IMR-90 (cell line): ENCODE measurements at regions of chr20 and their contacts with region 1.

Region 1: DNA sequence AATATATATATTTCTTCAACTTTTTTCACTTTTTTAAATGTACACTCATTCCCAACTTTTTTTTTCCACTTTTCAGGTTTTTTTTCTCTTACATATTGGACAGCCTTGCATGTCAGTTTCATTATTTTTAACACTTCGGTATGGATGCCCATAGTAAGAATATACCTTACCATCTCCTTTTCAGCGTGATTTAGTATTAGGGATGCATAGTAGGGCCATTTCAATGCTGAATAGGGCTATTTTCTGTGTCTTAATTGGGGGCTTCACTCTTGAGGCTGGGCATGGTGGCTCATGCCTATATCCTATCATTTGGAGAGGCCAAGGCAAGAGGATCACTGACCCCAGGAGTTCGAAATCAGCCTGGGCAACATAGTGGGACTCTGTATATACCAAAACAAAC is 6.7 kb downstream of the RNF114 start:
- DNase-seq: no peak
- ATAC-seq: no peak
- H3K4me3 ChIP-seq: no peak overlapping the region
- H3K27ac ChIP-seq: no peak overlapping the region
- H3K4me1 ChIP-seq: peaks cover 9% of the 10 kb centered on the region
- H3K27me3 ChIP-seq: no peaks in the 10 kb centered on the region
- CTCF ChIP-seq: no peak
- POLR2A ChIP-seq: no peak
- RAD21 ChIP-seq: no peak

Region 2: DNA sequence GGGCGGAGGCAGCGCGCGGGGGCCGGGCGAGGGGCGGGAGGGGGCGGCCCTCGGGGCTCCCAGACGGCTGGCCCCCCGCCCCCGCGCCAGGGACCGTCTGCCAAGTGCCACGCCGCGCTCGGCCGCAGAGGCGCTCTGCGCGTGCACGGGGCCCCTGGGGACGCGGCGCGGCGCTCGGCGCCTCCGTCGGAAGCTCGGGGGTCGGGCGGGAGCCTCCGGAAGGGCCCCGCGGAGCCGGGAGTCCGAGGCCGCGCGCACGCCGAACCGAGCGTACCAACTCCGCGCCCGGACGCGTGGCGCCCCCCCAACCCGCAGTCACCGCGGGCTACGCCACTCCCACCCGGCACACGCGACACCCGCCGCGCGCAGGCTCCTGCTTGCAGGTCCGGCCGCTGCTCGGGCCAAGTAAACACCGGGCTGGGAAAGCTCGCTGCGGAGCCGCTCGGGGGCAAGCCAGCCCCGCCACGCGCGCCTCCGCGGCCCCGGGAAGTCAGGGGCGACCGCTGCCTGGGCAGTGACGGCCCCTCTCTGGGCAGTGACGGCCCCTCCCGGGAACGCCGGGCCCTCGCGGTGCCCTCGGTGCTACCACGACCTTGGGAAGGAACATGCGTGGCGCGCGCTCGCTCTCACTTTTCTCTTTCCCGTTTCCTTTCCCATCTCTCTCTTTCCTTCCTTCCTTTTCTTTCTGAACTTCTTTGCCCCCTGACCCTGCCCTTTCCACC is 1114.8 kb before region 1 on chr20:
- CTCF ChIA-PET with region 1: no interaction called
- POLR2A ChIA-PET with region 1: no interaction called
- dilution Hi-C with region 1: no loop called
- in situ Hi-C with region 1: no loop called
- intact Hi-C with region 1: no loop called
- DNase-seq: peak; percentile 61
- ATAC-seq: peak; percentile 84
- H3K4me3 ChIP-seq: peak overlapping the region; percentile 58
- H3K27ac ChIP-seq: no peak overlapping the region
- H3K4me1 ChIP-seq: peaks cover 13% of the 10 kb centered on the region; the same call in 1 of the 2 replicates
- H3K27me3 ChIP-seq: peaks cover 18% of the 10 kb centered on the region
- CTCF ChIP-seq: no peak
- POLR2A ChIP-seq: no peak
- RAD21 ChIP-seq: no peak

Region 3: GRCh38 chr20:49608743-49609670 is 333.9 kb before region 1 on chr20:
- CTCF ChIA-PET with region 1: no interaction called
- POLR2A ChIA-PET with region 1: no interaction called
- dilution Hi-C with region 1: no loop called
- in situ Hi-C with region 1: no loop called
- intact Hi-C with region 1: no loop called
- DNase-seq: no peak
- ATAC-seq: peak; percentile 75
- H3K4me3 ChIP-seq: no peak overlapping the region
- H3K27ac ChIP-seq: no peak overlapping the region
- H3K4me1 ChIP-seq: peaks cover 12% of the 10 kb centered on the region
- H3K27me3 ChIP-seq: peaks cover 6% of the 10 kb centered on the region; the same call in 1 of the 2 replicates
- CTCF ChIP-seq: peak; percentile 93
- POLR2A ChIP-seq: 0 out of 2 replicates have a peak, but pooled peaks have one; percentile 34
- RAD21 ChIP-seq: peak; percentile 97

Region 4: DNA sequence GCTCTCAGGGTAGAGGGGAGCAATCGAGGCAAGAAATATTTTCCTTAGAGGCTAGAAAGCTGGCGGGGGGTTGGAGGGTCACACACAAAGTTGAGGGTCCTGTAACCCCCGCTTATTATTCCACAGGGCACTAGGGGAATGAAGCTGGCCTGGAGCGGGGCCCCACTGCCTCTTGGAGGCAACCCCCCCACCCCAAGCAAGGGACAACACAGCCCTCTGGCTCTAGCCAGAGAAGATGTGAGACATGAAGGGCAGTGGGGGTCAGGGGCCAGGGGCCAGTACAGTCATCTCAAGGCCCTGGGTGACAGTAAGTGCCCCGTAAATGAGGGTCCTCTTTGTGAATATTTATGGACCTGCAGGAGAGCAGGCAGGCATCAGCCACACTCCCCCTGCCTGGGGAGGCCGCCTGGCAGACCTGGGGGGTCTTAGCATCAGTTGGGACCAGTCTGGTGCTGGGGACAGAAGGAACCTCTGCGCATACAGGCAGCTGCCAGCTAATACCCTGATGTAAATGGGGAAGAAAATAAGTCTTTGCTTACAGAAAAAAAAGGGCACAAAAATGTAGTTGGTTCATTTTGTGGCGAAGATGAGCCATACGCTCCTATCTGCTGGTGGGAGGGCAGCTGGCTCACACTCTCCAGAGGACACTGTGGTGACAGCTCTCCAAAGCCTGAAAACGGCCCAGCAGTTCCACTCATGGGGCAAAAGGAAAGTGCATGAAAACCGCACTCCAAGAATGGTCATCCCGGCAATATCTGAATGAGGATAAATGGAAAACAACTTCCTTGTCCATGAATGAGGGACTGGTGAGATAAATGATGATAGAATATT is 49.5 kb before region 1 on chr20:
- CTCF ChIA-PET with region 1: no interaction called
- POLR2A ChIA-PET with region 1: no interaction called
- dilution Hi-C with region 1: no loop called
- in situ Hi-C with region 1: no loop called
- intact Hi-C with region 1: no loop called
- DNase-seq: peak; percentile 14
- ATAC-seq: peak; percentile 34; the same call in 1 of the 2 replicates
- H3K4me3 ChIP-seq: no peak overlapping the region
- H3K27ac ChIP-seq: no peak overlapping the region
- H3K4me1 ChIP-seq: peaks cover 21% of the 10 kb centered on the region
- H3K27me3 ChIP-seq: no peaks in the 10 kb centered on the region
- CTCF ChIP-seq: no peak
- POLR2A ChIP-seq: no peak
- RAD21 ChIP-seq: no peak

Region 5: DNA sequence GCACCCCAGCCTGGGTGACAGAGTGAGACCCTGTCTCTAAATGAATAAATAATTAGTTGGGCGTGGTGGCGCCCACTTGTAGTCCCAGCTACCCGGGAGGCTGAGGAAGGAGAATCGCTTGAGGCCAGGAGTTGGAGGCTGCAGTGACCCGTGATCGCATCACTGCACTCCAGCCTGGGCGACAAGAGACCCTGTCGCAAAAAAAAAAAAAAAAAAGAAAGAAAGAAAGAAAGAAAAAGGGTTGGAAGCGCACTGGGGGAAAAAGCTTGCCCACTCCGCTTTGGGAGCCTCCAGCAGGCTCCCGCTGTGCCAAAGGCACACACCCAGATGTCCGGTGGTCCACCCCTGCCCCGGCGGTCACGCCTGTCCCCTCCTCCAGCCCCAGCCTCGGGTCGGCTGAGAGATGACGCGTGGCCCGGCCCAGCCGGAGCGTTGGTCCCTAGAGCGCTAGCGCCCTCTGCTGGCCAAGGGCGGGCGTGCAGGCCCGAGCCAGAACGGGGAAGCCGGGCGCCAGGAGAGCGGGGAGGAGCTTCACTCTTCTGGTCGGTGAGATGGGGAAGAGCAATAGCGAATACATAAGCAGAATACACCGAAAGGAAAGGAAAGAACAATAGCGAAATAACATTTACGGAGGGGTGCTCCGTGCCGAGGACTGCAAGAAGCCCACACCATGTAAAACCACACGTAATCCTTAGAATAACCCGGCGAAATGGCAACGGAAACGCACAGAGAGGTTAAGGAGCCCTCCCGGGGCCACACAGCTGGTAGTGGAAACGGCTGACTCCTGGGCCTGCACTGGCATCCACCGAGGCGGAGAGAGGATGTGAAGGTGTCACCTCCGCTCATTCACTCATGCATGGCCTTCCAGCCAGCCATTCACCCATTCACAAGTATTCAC is 128.3 kb after region 1 on chr20:
- CTCF ChIA-PET with region 1: interaction called, 3 read pairs
- POLR2A ChIA-PET with region 1: interaction called, 11 read pairs
- dilution Hi-C with region 1: no loop called
- in situ Hi-C with region 1: no loop called
- intact Hi-C with region 1: no loop called
- DNase-seq: peak; percentile 63
- ATAC-seq: peak; percentile 97
- H3K4me3 ChIP-seq: peak overlapping the region; percentile 45
- H3K27ac ChIP-seq: peak overlapping the region; percentile 36; the same call in 1 of the 2 replicates
- H3K4me1 ChIP-seq: peaks cover 7% of the 10 kb centered on the region
- H3K27me3 ChIP-seq: no peaks in the 10 kb centered on the region
- CTCF ChIP-seq: peak; percentile 99
- POLR2A ChIP-seq: peak; percentile 68
- RAD21 ChIP-seq: peak; percentile 100

Region 6: DNA sequence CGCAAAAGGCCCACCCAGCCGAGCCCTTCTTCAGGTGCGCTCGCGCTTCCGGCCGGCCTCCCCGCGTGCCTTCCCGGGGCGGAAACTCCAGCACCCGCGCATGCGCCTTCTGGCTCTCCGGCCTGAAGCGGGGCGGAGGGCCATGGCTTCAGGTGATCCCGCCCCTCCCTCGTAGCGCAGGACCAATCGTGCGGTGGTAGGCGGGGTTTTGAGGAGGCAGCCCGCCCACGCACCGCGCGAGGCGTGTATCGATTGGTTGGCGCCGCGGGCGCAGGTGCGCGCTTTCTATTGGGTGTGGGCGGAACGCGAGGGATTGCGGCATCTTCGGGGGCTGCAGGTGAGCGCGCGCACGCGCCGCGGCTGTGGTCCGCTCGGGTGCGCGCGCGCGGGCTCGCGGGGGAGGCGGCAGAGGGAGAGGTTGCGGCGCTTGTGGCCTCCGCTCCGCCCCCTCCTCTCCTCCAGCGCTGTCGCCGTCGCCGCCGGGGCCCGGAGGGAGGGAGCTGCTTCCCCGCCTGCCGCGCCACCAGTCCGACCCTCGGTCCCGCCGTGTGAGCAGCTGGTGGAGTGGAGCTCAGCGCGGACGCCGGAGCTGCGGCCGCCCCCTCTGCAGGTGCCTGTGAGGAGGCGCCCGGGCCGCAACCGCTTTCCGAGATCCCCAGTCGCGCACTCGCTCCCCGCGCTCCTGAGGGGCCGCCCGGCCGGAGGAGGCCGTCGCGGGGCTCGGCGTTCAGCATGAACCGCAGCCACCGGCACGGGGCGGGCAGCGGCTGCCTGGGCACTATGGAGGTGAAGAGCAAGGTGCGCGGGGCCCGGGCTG is 788.3 kb after region 1 on chr20 and contains the start of gene PARD6B:
- CTCF ChIA-PET with region 1: no interaction called
- POLR2A ChIA-PET with region 1: no interaction called
- dilution Hi-C with region 1: no loop called
- in situ Hi-C with region 1: no loop called
- intact Hi-C with region 1: no loop called
- DNase-seq: peak; percentile 92
- ATAC-seq: peak; percentile 98
- H3K4me3 ChIP-seq: peak within 1 kb of the TSS; percentile 80
- H3K27ac ChIP-seq: peak within 1 kb of the TSS; percentile 20; the same call in 1 of the 2 replicates
- H3K4me1 ChIP-seq: peaks cover 3% of the 10 kb centered on the region
- H3K27me3 ChIP-seq: peaks cover 3% of the 10 kb centered on the region; the same call in 1 of the 2 replicates
- CTCF ChIP-seq: no peak
- POLR2A ChIP-seq: no peak
- RAD21 ChIP-seq: no peak
- total RNA-seq, gene PARD6B: 0.90 and 1.4 TPM in 2 replicates